HEK293 (cell line): ENCODE measurements at regions of chr10 and their contacts with region 1.

Region 1: DNA sequence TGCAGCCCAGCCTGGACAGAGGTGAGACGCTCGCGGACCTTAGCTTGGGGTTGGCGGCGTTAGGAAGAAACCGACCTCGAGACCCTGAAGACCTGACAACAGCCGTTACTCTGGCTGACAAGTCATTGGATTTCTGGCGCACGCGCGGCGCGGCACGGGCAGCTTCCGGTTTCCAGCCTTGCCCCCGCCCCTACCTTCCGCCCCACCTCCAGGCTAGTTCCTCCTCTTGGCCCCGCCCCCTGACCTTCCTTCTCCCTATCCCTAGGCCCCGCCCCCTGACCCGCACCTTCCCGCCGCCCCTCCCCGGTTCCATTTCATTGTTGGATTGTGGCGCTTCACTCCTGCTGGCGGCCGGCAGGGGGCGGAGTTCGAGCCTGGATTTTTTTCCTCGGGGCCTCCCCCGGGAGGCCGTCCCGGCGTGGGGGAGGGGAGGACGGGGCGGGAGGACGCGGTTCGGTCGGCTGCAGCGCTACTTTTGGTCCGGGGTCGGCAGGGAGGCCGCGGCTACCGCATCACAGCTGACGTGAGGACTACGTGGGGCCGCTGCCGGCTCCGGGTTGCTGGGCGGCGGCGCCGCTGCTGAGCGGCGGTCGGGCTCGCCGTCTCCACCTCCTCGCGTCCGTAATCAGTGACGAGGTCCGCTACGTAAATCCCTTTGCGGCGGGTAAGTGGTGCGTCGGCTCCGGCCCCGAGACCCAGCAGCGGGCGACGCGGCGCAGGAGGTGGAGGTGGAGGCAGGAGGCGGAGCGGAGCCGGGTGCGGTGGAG is at the start of gene CREM:
- H3K4me3 ChIP-seq: peak within 1 kb of the TSS; percentile 76
- H3K27ac ChIP-seq: peak within 1 kb of the TSS; percentile 97
- H3K4me1 ChIP-seq: peaks cover 11% of the 10 kb centered on the region
- CTCF ChIP-seq: peak; percentile 89

Region 2: DNA sequence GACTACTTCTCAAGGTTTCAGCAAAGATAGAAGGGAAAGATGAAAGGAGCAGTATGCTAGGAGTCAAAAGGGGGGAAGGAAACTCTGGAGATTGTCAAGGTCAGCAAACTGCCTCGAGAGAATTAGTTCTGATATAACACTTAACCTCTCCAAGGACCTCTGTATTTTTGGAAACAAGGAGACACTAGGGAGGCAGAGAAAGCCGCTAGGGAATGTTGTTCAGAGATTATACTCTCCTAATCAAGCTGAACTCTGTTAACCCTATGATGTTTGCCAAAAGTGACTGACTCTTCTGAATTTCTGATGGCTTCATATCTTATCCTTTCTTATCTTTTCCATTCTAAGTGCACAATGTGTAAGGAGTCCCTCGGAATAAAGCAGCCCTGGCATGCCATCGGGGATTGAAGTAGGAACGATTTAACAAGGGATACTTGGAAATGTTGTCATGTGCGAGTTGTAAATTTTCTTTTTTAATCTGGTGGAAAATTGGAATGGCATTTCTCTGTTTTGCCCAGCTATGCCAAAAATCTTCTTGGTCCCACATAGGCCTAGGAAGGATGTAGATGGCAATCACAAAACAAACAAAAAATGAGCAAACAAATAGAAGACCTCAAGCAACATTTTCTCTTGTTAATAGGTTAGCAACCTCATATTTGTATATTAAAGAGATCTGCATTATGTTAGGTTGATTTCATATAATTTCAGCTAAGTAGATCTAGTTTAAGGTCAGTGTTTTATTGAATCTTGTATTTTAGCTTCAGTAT is 27.2 kb after region 1 on chr10:
- CTCF ChIA-PET with region 1: no interaction called
- POLR2A ChIA-PET with region 1: no interaction called
- H3K4me3 ChIP-seq: no peak overlapping the region
- H3K27ac ChIP-seq: no peak overlapping the region
- H3K4me1 ChIP-seq: peaks cover 10% of the 10 kb centered on the region
- CTCF ChIP-seq: no peak

Region 3: GRCh38 chr10:35218339-35218955 is 91.7 kb after region 1 on chr10:
- CTCF ChIA-PET with region 1: interaction called, 59 read pairs
- POLR2A ChIA-PET with region 1: interaction called, 5 read pairs
- H3K4me3 ChIP-seq: no peak overlapping the region
- H3K27ac ChIP-seq: no peak overlapping the region
- H3K4me1 ChIP-seq: no peaks in the 10 kb centered on the region
- CTCF ChIP-seq: peak; percentile 61